ENCODE measurements at regions of chr10 and their contacts with region 1.

Region 1: GRCh38 chr10:73625884-73626752 is 15.2 kb downstream of the MYOZ1 start:
- DNase-seq: peak; percentile 86 to 98
- H3K4me3 ChIP-seq: peak overlapping the region; percentile 70 to 97
- H3K27ac ChIP-seq: peak overlapping the region; percentile 77 to 79
- H3K4me1 ChIP-seq: peaks cover 0 to 11% of the 10 kb centered on the region in 2 donors
- H3K27me3 ChIP-seq: no peaks in the 10 kb centered on the region
- CTCF ChIP-seq: no peak

Region 2: GRCh38 chr10:73529089-73529832 is 96.9 kb before region 1 on chr10:
- intact Hi-C with region 1: loop called (anchors 1 kb)
- DNase-seq: no peak
- H3K4me3 ChIP-seq: no peak overlapping the region
- H3K27ac ChIP-seq: no peak overlapping the region
- H3K4me1 ChIP-seq: no peaks in the 10 kb centered on the region
- H3K27me3 ChIP-seq: no peaks in the 10 kb centered on the region
- CTCF ChIP-seq: peak; percentile 77 to 83 (median 82)

Region 3: DNA sequence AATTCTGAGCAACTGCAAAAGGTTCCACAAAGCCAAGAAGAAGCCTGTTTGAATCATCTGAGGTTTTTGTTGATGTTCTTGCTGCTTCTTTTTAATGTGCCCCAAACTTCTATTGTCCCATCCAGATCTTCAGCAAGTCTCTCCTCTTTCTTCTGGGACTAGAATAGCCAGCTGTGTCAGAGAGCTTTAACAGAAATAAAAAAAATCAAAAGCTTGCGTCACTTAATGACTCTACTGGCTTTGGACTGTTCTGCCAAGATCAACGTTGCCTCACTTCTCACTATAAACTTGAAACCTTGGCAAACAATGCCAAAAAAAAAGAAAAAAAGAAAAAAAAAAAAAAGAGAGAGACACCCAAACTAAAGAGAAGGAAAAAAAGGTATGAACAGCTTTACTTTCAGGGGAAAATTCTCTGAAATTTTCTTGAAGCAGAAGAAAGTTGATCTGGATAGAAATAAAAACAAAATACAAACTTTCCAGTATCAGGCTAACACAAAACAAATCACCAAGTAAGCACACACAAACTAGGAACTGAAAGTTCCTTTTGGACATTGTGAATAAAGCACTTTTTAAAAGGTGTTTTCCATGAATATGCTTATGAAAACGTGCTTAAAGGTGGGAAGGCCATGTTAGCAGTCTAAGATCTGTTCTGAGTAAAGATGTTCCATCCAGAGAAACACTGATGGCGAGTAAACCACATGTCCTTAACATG is 49.8 kb before region 1 on chr10:
- intact Hi-C with region 1: loop called (anchors 1 kb)
- DNase-seq: peak in 1 of 2 donors; percentile 80
- H3K4me3 ChIP-seq: peak overlapping the region; percentile 29 to 55
- H3K27ac ChIP-seq: peak overlapping the region; percentile 81 to 83
- H3K4me1 ChIP-seq: peaks cover 13 to 37% of the 10 kb centered on the region in 2 donors
- H3K27me3 ChIP-seq: no peaks in the 10 kb centered on the region
- CTCF ChIP-seq: no peak